HCT116 (cell line): ENCODE measurements at regions of chr3 and their contacts with region 1.

Region 1: GRCh38 chr3:99842826-99843589 is 25.3 kb downstream of the CMSS1 start:
- DNase-seq: peak; percentile 12
- ATAC-seq: peak; percentile 73
- H3K4me3 ChIP-seq: no peak overlapping the region
- H3K27ac ChIP-seq: no peak overlapping the region
- H3K4me1 ChIP-seq: no peaks in the 10 kb centered on the region
- H3K27me3 ChIP-seq: no peaks in the 10 kb centered on the region
- CTCF ChIP-seq: peak; percentile 61 to 81 (median 64); a peak in 5 of 6 replicates
- POLR2A ChIP-seq: no peak
- RAD21 ChIP-seq: peak; percentile 81

Region 2: GRCh38 chr3:99859825-99860224 is 16.8 kb after region 1 on chr3:
- CTCF ChIA-PET with region 1: interaction called, 10 read pairs
- POLR2A ChIA-PET with region 1: no interaction called
- RAD21 ChIA-PET with region 1: no interaction called
- intact Hi-C with region 1: no loop called
- DNase-seq: no peak
- ATAC-seq: no peak
- H3K4me3 ChIP-seq: no peak overlapping the region
- H3K27ac ChIP-seq: no peak overlapping the region
- H3K4me1 ChIP-seq: peaks cover 0 to 17% of the 10 kb centered on the region in 2 experiments; a peak in 2 of 4 replicates
- H3K27me3 ChIP-seq: no peaks in the 10 kb centered on the region
- CTCF ChIP-seq: no peak
- POLR2A ChIP-seq: no peak
- RAD21 ChIP-seq: no peak

Region 3: DNA sequence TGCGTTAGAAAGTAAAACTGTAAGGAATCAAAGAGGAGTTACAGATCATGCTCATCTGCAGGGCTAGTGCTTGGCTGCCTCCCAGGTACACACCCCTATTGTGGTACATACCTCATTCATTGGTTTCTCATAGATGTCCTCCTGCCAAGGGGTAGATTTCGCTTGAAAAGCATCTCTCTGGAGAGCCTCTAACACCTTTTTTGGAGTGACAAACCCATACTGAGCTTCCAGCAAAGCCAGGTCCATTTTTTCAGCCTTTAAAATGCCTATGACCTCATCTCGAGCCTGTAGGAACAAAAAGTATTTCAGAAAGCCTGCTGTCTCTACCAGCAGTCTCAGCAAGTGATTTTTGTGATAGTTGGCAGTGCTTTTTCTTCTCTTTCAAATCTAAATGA is 86.7 kb after region 1 on chr3:
- CTCF ChIA-PET with region 1: no interaction called
- POLR2A ChIA-PET with region 1: no interaction called
- RAD21 ChIA-PET with region 1: no interaction called
- intact Hi-C with region 1: no loop called
- DNase-seq: no peak
- ATAC-seq: no peak
- H3K4me3 ChIP-seq: no peak overlapping the region
- H3K27ac ChIP-seq: no peak overlapping the region
- H3K4me1 ChIP-seq: peaks cover 0 to 8% of the 10 kb centered on the region in 2 experiments; a peak in 2 of 4 replicates
- H3K27me3 ChIP-seq: no peaks in the 10 kb centered on the region
- CTCF ChIP-seq: no peak
- POLR2A ChIP-seq: no peak
- RAD21 ChIP-seq: no peak

Region 4: DNA sequence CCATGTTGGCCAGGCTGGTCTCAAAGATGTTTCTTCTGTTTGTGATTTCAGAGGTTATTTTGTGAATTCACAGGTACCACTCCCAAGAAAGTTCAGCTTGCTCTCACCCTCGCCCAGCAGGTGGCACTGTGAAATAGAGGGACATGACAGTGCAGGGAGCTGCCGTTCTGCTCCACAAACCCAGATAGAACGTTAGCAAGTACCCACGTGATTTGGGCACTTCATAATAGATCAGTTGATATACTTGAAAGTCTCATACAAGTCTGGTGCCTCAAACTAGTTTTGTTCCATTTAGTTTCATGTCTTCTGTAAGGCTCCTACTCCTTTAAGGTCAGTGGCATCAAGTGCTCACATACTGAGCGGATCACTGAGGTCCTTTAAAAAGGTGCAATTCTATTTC is 225.8 kb after region 1 on chr3:
- CTCF ChIA-PET with region 1: interaction called, 3 read pairs
- POLR2A ChIA-PET with region 1: no interaction called
- RAD21 ChIA-PET with region 1: no interaction called
- intact Hi-C with region 1: loop called (anchors 2 kb)
- DNase-seq: peak; percentile 47
- ATAC-seq: peak; percentile 100
- H3K4me3 ChIP-seq: no peak overlapping the region
- H3K27ac ChIP-seq: no peak overlapping the region
- H3K4me1 ChIP-seq: peaks cover 0 to 3% of the 10 kb centered on the region in 2 experiments; a peak in 1 of 4 replicates
- H3K27me3 ChIP-seq: no peaks in the 10 kb centered on the region
- CTCF ChIP-seq: peak; percentile 33 to 84 (median 77); a peak in 5 of 6 replicates
- POLR2A ChIP-seq: no peak
- RAD21 ChIP-seq: peak; percentile 70

Region 5: GRCh38 chr3:100089812-100090668 is 247.0 kb after region 1 on chr3:
- CTCF ChIA-PET with region 1: interaction called, 5 read pairs
- POLR2A ChIA-PET with region 1: no interaction called
- RAD21 ChIA-PET with region 1: no interaction called
- intact Hi-C with region 1: loop called (anchors 5 kb)
- DNase-seq: peak; percentile 16
- ATAC-seq: peak; percentile 98
- H3K4me3 ChIP-seq: no peak overlapping the region
- H3K27ac ChIP-seq: no peak overlapping the region
- H3K4me1 ChIP-seq: no peaks in the 10 kb centered on the region
- H3K27me3 ChIP-seq: no peaks in the 10 kb centered on the region
- CTCF ChIP-seq: peak in 2 of 3 experiments; percentile 52 to 60; a peak in 4 of 6 replicates
- POLR2A ChIP-seq: no peak
- RAD21 ChIP-seq: peak; percentile 12; the same call in 1 of the 2 replicates

Region 6: DNA sequence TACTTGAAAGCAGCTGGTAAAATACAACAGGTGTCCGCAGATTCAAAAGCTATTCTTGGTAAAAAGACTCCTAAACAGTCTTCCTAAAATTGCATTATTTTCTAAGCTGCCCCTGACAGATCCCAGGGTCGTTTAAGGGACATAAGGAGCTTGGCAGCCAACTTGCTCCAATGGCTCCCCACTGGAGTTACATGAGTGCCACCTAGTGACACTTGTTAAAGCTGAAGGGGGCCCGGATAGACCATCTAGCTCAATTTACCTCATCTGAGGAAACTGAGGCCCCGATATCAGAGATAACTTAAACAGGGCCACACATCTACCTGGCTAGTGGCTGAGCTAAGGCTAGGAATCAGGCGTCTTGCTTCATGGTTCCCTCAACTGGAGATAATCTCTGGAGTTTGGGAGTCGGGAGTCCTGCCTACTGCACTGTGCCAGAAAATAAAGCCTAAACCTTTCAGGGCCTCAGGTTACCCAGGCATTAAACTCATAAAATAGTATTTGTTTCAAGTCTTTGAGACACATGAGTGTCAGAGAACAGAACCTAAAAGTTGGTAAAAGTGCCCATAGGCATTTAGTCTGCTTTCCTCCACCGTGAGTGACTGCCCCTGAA is 411.3 kb after region 1 on chr3:
- CTCF ChIA-PET with region 1: interaction called, 73 read pairs
- POLR2A ChIA-PET with region 1: interaction called, 3 read pairs
- RAD21 ChIA-PET with region 1: interaction called, 15 to 17 read pairs
- intact Hi-C with region 1: loop called (anchors 1 kb)
- DNase-seq: peak; percentile 73
- ATAC-seq: peak; percentile 97
- H3K4me3 ChIP-seq: no peak overlapping the region
- H3K27ac ChIP-seq: no peak overlapping the region
- H3K4me1 ChIP-seq: no peaks in the 10 kb centered on the region
- H3K27me3 ChIP-seq: no peaks in the 10 kb centered on the region
- CTCF ChIP-seq: peak; percentile 76; a peak in 5 of 6 replicates
- POLR2A ChIP-seq: no peak
- RAD21 ChIP-seq: peak; percentile 93

Region 7: DNA sequence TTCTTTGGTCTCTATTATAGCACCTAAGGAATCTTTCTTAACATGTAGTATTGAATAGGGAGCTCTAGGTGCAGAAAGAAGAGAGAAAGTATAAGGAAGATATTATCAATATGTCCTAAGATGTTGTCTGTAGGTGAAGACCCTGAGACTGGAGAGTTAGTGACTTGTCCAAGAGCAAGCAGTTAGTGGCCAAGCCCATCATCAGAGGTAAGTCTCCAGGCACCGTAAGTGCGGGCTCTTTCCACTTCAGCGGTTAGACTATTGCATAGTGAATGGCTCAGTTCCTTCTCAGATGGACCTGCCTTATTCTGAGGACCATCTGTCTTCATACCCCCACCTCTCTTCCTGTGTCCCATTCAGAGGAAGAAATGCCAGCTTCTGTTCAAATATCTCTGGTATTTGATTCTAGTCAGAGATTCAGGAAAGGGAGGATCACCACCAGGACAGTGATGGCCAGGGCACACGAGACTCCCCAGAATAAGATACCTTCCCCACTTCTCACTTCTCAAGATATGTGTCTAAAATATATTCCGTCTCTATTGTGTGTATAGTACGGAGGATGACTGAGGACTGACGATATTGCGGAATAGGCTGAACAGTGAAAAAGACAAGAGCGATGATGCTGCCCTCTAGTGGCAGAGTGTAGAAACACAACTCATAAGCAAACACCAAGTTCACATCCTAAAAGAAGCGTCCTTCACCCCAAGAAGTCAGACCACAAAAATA is 747.3 kb after region 1 on chr3:
- CTCF ChIA-PET with region 1: no interaction called
- POLR2A ChIA-PET with region 1: no interaction called
- RAD21 ChIA-PET with region 1: no interaction called
- intact Hi-C with region 1: loop called (anchors 5 kb)
- DNase-seq: peak; percentile 63
- ATAC-seq: peak; percentile 91
- H3K4me3 ChIP-seq: peak overlapping the region; percentile 16 to 42; a peak in 3 of 4 replicates
- H3K27ac ChIP-seq: no peak overlapping the region
- H3K4me1 ChIP-seq: peaks cover 0 to 5% of the 10 kb centered on the region in 2 experiments; a peak in 1 of 4 replicates
- H3K27me3 ChIP-seq: no peaks in the 10 kb centered on the region
- CTCF ChIP-seq: peak; percentile 75 to 89 (median 76)
- POLR2A ChIP-seq: no peak
- RAD21 ChIP-seq: peak; percentile 87